PC-9 (cell line): ENCODE measurements at regions of chr5 and their contacts with region 1.

Region 1: GRCh38 chr5:178732281-178732680 is 1.8 kb upstream of the ZNF354A start:
- DNase-seq: no peak
- H3K4me3 ChIP-seq: no peak overlapping the region
- H3K27ac ChIP-seq: no peak overlapping the region
- H3K4me1 ChIP-seq: no peaks in the 10 kb centered on the region
- H3K27me3 ChIP-seq: no peaks in the 10 kb centered on the region
- CTCF ChIP-seq: no peak

Region 2: DNA sequence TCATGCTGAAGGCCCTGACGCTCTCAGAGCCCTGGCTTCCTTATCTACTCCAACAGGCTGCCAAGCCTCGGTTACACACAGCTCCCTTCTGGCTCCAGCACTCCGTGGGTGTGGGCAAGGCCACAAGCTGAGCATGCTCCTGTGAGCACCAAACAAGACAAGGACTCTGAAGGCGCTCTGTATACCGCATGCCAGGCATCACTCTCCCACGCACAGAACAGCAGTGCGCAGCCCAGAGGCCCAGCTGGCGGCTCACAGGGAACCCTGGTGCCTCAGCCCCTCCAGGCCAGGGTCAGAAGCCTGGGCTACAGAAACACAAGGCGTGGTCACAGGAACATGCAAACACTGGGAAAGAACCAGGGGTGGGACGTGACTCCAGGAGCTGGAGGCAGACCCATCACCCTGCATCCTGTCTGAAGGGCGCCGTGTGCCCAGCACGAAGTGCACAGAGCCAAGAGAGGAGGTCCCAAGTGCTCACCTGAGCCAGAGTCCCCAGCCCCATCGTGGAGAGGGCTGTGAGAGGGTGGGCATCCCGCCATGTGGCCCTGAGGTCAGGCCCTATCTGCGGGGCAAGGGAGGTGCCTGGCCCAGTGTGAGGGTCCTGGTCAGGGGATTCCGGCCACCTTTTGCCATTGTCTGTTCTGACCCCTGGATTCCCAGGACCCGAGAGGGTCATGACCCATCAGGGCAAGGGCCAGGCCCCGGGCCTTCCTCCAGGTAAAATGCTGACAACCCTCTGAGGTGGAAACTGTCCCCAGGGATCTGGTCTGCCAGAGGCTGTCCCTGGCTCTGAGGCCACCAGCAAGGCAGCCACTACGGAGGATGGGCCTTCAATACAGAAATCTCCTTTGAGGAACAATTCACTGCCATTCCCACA is 196.7 kb before region 1 on chr5:
- CTCF ChIA-PET with region 1: no interaction called
- POLR2A ChIA-PET with region 1: interaction called, 13 read pairs
- intact Hi-C with region 1: no loop called
- DNase-seq: no peak
- H3K4me3 ChIP-seq: no peak overlapping the region
- H3K27ac ChIP-seq: no peak overlapping the region
- H3K4me1 ChIP-seq: no peaks in the 10 kb centered on the region
- H3K27me3 ChIP-seq: peaks cover 96% of the 10 kb centered on the region
- CTCF ChIP-seq: no peak

Region 3: DNA sequence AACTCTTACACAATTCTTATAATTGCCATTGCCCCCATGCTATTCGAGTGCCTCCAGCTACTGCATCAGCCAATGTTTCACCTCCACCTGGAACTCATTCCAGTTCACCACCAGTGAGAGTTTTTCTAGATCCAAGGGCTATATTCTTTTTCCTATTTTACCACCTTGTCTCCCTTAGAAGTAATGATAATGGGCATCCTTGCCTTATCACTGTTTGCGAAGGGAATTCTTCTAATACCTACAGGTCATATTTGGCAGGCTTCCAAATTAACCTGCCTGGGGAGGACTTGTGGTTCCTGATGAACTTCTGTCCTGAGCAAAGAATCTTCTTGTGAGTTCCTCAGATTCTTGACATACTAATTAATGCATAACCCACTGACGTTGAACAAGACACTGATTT is 97.1 kb before region 1 on chr5:
- CTCF ChIA-PET with region 1: no interaction called
- POLR2A ChIA-PET with region 1: no interaction called
- intact Hi-C with region 1: loop called (anchors 2 kb)
- DNase-seq: peak; percentile 71 to 99
- H3K4me3 ChIP-seq: no peak overlapping the region
- H3K27ac ChIP-seq: peak overlapping the region; percentile 49
- H3K4me1 ChIP-seq: peaks cover 37% of the 10 kb centered on the region
- H3K27me3 ChIP-seq: no peaks in the 10 kb centered on the region
- CTCF ChIP-seq: no peak

Region 4: GRCh38 chr5:178786859-178787760 is 54.8 kb after region 1 on chr5:
- CTCF ChIA-PET with region 1: interaction called, 3 read pairs
- POLR2A ChIA-PET with region 1: no interaction called
- intact Hi-C with region 1: loop called (anchors 2 kb)
- DNase-seq: peak; percentile 68 to 95
- H3K4me3 ChIP-seq: no peak overlapping the region; the same call in 1 of the 2 replicates
- H3K27ac ChIP-seq: peak overlapping the region; percentile 23; the same call in 1 of the 2 replicates
- H3K4me1 ChIP-seq: peaks cover 23% of the 10 kb centered on the region
- H3K27me3 ChIP-seq: no peaks in the 10 kb centered on the region
- CTCF ChIP-seq: no peak; the same call in 1 of the 2 replicates

Region 5: GRCh38 chr5:178859625-178860531 is 127.6 kb after region 1 on chr5 and contains the start of gene ZNF354B:
- CTCF ChIA-PET with region 1: no interaction called
- POLR2A ChIA-PET with region 1: no interaction called
- intact Hi-C with region 1: loop called (anchors 1 kb)
- DNase-seq: peak; percentile 83 to 85
- H3K4me3 ChIP-seq: peak within 1 kb of the TSS; percentile 76
- H3K27ac ChIP-seq: no peak within 1 kb of the TSS
- H3K4me1 ChIP-seq: peaks cover 9% of the 10 kb centered on the region; the same call in 1 of the 2 replicates
- H3K27me3 ChIP-seq: no peaks in the 10 kb centered on the region
- CTCF ChIP-seq: peak; percentile 44; the same call in 1 of the 2 replicates
- total RNA-seq, gene ZNF354B: 10.6 and 11.2 TPM in 2 replicates

Region 6: GRCh38 chr5:179166886-179167841 is 434.9 kb after region 1 on chr5:
- CTCF ChIA-PET with region 1: no interaction called
- POLR2A ChIA-PET with region 1: interaction called, 3 read pairs
- intact Hi-C with region 1: loop called (anchors 10 kb)
- DNase-seq: peak in 1 of 2 experiments; percentile 43
- H3K4me3 ChIP-seq: no peak overlapping the region
- H3K27ac ChIP-seq: no peak overlapping the region
- H3K4me1 ChIP-seq: no peaks in the 10 kb centered on the region
- H3K27me3 ChIP-seq: peaks cover 89% of the 10 kb centered on the region
- CTCF ChIP-seq: peak; percentile 69